ENCODE measurements at regions of chr9 and their contacts with region 1.

Region 1: GRCh38 chr9:109349421-109349846 is 28.6 kb upstream of the EPB41L4B start:
- DNase-seq: no peak
- H3K4me3 ChIP-seq: no peak overlapping the region
- H3K27ac ChIP-seq: no peak overlapping the region
- H3K4me1 ChIP-seq: peaks cover 6 to 9% (median 7%) of the 10 kb centered on the region in 4 experiments; a peak in 5 of 7 replicates
- H3K27me3 ChIP-seq: no peaks in the 10 kb centered on the region
- CTCF ChIP-seq: no peak
- EP300 ChIP-seq: no peak
- POLR2A ChIP-seq: no peak
- RAD21 ChIP-seq: no peak

Region 2: DNA sequence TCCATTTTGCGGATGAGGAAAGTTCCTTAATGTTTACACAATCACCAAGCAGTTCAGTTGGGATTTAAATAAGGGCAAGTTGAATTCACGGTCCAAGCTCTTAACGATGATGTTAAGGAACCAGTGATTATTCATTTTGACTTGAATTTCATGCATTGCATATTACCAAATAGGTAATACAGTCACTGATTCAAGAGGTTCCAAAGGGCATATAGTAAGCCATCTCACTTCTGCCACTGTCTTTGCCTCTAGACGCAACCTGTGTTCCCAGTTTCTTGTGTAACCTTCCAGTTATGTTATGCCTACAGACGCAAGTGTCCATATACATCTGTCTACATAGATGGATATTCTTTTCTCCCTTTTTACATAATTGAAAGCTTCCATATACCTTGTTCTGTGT is 11.3 kb after region 1 on chr9:
- CTCF ChIA-PET with region 1: interaction called, 29 read pairs
- POLR2A ChIA-PET with region 1: no interaction called
- DNase-seq: no peak
- H3K4me3 ChIP-seq: no peak overlapping the region
- H3K27ac ChIP-seq: no peak overlapping the region
- H3K4me1 ChIP-seq: no peaks in the 10 kb centered on the region
- H3K27me3 ChIP-seq: no peaks in the 10 kb centered on the region
- CTCF ChIP-seq: no peak
- EP300 ChIP-seq: no peak
- POLR2A ChIP-seq: no peak
- RAD21 ChIP-seq: no peak

Measured in H1 (cell line).